ENCODE measurements at regions of chr6 and their contacts with region 1.

Region 1: DNA sequence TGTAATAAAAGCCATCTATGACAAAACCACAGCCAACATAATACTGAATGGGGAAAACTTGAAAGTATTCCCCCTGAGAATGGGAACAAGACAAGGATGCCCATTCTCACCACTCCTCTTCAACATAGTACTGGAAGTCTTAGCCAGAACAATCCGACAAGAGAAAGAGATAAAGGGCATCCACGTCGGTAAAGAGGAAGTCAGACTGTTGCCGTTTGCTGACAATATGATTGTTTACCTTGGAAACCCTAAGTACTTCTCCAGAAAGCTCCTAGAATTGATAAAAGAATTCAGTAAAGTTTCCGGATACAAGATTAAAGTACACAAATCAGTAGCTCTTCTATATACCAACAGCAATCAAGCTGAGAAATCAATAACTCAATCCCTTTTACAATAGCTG is 14.0 kb upstream of the RUNX2 start:
- DNase-seq: no peak
- H3K4me3 ChIP-seq: no peak overlapping the region
- H3K27ac ChIP-seq: no peak overlapping the region
- H3K4me1 ChIP-seq: no peaks in the 10 kb centered on the region
- H3K27me3 ChIP-seq: no peaks in the 10 kb centered on the region
- CTCF ChIP-seq: no peak
- EP300 ChIP-seq: no peak
- POLR2A ChIP-seq: no peak

Region 2: DNA sequence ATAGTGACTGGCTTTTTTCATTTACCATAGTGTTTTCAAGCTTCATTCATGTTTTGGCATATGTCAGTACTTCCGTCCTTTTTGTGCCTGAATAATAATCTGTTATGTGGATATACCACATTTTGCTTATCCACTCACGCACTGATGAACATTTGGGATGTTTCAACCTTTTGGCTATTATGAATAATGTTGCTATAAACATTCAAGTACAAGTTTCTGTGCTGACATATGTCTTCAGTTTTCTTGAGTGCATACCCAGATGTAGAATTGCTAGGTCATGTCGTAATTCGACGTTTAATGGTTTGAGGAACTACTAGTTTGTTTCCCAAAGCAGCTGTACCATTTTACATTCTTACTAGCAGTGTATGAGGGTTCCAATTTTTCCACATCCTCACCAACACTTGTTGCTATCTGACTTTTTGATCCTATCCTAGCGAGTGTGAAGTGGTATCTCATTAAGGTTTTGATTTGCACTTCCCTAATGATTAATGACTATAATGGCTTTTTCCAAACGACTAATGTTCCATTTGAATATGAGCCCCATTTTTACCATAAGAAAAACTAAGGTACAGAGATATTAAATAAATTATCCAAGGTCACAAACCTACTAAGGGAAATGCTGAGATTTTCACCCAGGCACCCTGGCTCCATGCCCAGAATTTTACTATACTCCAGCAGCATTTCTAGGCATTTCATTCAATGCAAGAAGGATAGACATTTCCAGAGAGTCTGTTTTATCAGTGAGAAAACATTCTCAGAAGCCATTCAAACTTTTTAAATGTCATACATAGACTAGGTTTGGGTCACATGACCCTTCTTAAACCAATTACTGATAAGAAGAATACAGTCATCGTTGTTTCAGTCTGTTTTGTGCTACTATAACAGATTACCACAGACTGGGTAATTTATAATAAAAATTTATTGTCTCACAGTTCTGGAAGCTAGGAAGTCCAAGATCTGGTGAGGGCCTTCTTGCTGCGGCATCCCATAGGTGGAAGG is 57.1 kb before region 1 on chr6:
- in situ Hi-C with region 1: no loop called
- intact Hi-C with region 1: loop called (anchors 2 kb)
- DNase-seq: no peak
- H3K4me3 ChIP-seq: no peak overlapping the region
- H3K27ac ChIP-seq: no peak overlapping the region
- H3K4me1 ChIP-seq: no peaks in the 10 kb centered on the region
- H3K27me3 ChIP-seq: no peaks in the 10 kb centered on the region
- CTCF ChIP-seq: no peak
- EP300 ChIP-seq: no peak
- POLR2A ChIP-seq: no peak

Region 3: DNA sequence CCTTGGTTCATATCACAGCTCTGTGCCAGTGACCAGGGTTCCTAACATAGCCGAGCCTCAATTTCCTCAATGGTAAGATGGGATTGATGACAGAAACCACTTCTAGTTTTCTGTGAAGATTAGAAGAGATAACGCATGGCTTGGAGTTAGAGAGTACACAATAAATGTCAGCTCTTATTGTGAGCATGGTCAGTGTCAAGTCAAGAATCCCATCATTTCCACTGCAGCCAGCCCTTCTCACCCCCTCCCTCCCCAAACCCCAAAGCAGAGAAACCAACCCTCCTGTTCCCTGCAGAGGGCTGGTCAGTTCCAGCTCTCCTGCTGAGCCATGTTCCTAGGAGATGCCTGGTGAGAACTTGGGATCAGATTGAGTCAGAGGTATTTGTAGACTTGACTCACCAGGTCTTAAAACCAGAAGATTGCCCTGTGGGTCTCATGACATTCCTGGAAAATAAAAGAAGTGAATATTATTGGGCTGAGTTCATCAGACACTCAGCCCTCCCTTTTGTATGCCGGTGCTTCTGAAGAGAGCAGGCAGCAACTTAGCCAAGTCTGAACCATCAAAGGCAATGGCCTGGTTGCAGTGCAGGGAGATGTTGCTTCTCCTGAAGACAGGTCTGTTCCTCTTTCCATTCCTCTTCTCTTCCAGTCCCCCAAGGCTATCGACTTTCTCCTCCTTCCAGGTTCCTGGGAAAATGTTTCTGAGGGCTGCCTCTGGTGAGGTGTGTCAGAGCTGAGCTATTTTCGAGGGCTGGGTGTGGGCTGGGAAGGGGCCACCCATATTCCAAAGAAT is 341.7 kb after region 1 on chr6:
- in situ Hi-C with region 1: no loop called
- intact Hi-C with region 1: no loop called
- DNase-seq: no peak
- H3K4me3 ChIP-seq: no peak overlapping the region
- H3K27ac ChIP-seq: peak overlapping the region in 1 of 4 donors; percentile 12
- H3K4me1 ChIP-seq: no peaks in the 10 kb centered on the region
- H3K27me3 ChIP-seq: no peaks in the 10 kb centered on the region
- CTCF ChIP-seq: no peak
- EP300 ChIP-seq: peak; percentile 25
- POLR2A ChIP-seq: no peak